Activated CD4-positive, alpha-beta T cell treated with anti-CD3 and anti-CD28 coated beads, Interleukin-2, amount 10 ng/mL, durations not matched to agents 24 days and 14 days (primary cell): ENCODE measurements at regions of chr14 and their contacts with region 1.

Region 1: DNA sequence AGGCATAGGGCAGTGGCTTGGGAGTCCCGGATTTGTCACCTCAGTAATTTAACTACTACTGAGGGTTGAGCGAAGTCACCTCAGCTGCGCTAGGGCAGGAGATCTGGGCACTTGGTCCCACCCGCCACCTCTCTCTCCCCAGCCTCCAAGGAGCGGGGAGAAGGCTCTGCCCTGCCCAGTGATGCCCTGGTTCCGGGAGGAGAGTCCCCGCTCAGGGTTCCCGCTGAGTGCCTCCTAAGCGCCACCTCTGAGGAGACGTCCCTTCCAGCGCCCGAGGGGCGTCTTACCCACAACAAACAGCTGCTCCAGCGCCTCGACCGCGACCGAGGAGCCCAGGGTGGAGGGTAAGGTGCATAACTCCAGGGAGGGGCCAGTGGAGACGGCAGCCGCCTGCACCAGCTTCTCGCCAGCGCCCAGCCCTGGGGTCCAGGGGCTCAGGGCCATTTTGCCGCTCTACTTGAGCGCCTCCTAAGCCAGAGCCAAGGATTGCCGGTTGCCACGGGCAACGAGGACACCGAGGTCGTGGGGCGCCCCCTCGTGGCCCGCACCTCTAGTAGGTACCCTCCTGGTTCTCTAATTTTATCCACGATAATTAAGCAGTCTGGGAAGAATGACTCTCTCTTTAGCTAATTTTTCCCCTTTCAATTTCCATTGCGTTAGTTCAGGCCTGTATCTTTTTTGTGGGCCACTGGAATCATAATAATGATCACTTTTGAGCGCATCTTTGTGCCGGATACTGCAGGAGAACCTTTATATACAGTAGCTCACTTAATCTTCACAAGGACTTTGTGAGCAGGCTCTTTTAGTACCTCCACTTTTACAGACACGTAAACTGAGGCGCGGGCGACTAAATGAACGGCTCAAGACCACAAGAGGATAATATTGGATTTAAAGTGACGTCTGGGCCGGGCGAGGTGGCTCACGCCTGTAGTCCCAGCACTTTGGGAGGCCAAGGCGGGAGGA is at the start of gene CCDC175:
- DNase-seq: peak; percentile 93
- H3K4me3 Mint-ChIP-seq: peak within 1 kb of the TSS; percentile 81
- H3K27ac Mint-ChIP-seq: no peak within 1 kb of the TSS
- H3K4me1 Mint-ChIP-seq: peaks cover 4% of the 10 kb centered on the region
- H3K27me3 Mint-ChIP-seq: peaks cover 35% of the 10 kb centered on the region
- total RNA-seq, gene CCDC175: not detected in 2 replicates

Region 2: GRCh38 chr14:59126710-59127432 is 449.7 kb before region 1 on chr14:
- intact Hi-C with region 1: loop called (anchors 1 kb)
- DNase-seq: peak; percentile 75
- H3K4me3 Mint-ChIP-seq: no peak overlapping the region
- H3K27ac Mint-ChIP-seq: no peak overlapping the region
- H3K4me1 Mint-ChIP-seq: no peaks in the 10 kb centered on the region
- H3K27me3 Mint-ChIP-seq: peaks cover 23% of the 10 kb centered on the region

Region 3: DNA sequence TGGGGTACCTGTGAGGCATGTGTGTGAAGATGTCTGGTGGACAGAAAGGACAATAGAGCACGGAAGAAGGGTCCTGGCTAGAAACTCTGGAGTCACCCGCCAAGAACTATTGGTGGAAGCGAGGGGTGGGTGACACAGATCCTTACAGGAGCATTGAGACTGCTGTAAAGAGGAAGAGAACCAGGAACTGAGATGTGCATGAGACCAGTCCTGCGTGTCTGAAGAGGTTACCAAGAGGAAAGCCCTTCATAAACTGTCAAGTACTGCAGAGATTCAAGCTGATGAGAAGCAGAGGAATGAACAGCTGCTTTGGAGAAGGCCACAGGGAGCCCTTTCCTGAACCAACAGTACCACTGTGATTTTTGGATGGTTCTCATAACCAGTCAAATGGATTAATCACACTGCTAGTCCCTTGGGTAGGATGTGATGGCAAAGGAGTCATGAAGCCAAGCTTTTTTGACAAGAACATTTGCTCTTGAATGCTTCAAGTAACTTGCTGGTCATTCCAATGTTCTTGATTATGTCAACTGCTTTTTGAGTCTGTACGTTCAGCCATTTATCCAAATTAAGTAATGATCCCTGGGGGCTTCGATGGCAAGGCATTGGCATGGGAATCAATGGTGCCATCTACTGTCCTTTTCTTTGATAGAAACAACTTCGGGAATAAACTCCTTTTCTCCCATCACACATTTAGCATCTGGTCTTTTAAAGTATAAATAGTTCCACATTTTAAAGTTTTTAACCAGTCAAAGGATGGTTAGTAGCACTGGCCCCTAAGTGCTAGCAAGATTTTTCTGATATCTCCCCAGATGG is 154.3 kb before region 1 on chr14:
- intact Hi-C with region 1: no loop called
- DNase-seq: no peak
- H3K4me3 Mint-ChIP-seq: no peak overlapping the region
- H3K27ac Mint-ChIP-seq: no peak overlapping the region
- H3K4me1 Mint-ChIP-seq: no peaks in the 10 kb centered on the region
- H3K27me3 Mint-ChIP-seq: peaks cover 12% of the 10 kb centered on the region

Region 4: GRCh38 chr14:59507063-59507780 is 69.4 kb before region 1 on chr14:
- intact Hi-C with region 1: loop called (anchors 1 kb)
- DNase-seq: peak; percentile 87
- H3K4me3 Mint-ChIP-seq: no peak overlapping the region
- H3K27ac Mint-ChIP-seq: no peak overlapping the region
- H3K4me1 Mint-ChIP-seq: peaks cover 3% of the 10 kb centered on the region
- H3K27me3 Mint-ChIP-seq: peaks cover 9% of the 10 kb centered on the region